Aorta (tissue), 5 donors: ENCODE measurements at regions of chrX and their contacts with region 1.

Region 1: DNA sequence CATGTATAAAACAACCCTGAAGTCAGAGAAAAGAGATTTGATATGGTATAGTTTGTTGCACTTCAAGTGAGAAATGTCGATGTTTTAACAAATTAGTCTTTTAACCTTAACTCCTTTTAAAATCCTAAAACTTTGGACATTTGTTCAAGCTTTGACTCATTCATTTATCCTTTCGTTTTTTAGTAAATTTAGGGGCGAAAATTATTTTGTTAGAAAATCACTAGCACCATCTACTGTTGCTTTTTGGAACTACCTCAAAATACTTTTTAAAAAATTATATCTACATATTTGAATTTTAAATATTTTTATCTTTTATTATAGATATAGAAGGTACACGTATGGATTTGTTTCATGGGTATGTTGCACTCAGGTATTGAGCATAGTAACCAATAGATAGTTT is 165.1 kb upstream of the POF1B start:
- DNase-seq: no peak
- ATAC-seq: no peak
- H3K4me3 ChIP-seq: no peak overlapping the region
- H3K27ac ChIP-seq: no peak overlapping the region
- H3K4me1 ChIP-seq: no peaks in the 10 kb centered on the region
- H3K27me3 ChIP-seq: no peaks in the 10 kb centered on the region

Region 2: GRCh38 chrX:85111347-85111746 is 433.3 kb before region 1 on chrX:
- intact Hi-C with region 1: loop called (anchors 5 to 10 kb)
- DNase-seq: no peak
- ATAC-seq: no peak
- H3K4me3 ChIP-seq: no peak overlapping the region
- H3K27ac ChIP-seq: no peak overlapping the region
- H3K4me1 ChIP-seq: no peaks in the 10 kb centered on the region
- H3K27me3 ChIP-seq: no peaks in the 10 kb centered on the region